Uterus (tissue), 4 donors: ENCODE measurements at regions of chr22 and their contacts with region 1.

Region 1: DNA sequence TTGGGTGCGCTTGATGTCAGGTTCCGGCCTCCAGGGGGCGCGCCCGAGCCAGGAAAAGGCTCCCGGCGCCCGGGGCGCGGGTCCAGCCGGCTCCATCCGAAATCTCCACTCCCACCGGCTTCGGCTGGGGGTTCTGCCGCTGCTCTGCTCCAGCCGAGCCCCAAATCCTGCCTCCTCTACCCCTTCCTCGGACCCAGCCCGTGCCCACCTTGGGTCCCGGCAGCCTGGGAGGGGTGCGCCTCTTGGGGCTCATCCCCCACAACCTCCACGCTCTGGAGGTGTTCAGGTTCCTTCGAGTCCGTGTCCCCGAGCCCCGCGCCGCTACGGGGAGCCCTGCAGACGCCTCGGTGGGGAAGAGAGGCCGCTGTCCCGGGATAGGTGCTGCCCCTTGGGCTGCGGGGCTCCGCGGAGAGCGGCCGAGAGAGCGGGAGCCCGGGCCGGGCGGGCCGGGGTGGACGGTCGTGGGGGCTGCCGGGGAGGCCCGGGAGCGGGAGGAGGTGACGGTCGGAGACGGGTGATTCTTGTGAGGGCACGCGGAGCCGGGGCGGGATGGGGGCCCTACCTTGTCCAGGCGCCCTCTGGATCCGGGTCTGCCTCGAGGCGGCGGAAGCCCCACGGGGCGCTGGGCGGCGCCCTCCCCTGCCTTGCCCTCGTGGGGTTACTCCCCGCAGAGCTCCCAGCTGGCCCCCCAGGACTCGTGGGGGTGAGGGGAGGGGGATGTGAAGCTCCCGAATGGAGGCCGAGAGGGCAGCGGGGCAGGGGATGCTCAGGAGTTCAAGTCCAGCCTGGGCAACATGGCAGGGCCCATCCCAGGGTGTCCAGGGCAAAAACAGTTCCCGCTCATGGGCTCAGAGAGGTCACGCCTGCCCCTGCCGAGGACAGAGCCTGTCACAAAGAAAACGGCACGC is 13.2 kb upstream of the CYB5R3 start:
- DNase-seq: peak; percentile 85 to 91
- H3K4me3 ChIP-seq: peak overlapping the region; percentile 45
- H3K27ac ChIP-seq: peak overlapping the region; percentile 70 to 73
- H3K4me1 ChIP-seq: no peaks in the 10 kb centered on the region
- H3K27me3 ChIP-seq: no peaks in the 10 kb centered on the region
- CTCF ChIP-seq: peak; percentile 79 to 90 (median 84)
- POLR2A ChIP-seq: peak in 1 of 2 donors; percentile 34

Region 2: DNA sequence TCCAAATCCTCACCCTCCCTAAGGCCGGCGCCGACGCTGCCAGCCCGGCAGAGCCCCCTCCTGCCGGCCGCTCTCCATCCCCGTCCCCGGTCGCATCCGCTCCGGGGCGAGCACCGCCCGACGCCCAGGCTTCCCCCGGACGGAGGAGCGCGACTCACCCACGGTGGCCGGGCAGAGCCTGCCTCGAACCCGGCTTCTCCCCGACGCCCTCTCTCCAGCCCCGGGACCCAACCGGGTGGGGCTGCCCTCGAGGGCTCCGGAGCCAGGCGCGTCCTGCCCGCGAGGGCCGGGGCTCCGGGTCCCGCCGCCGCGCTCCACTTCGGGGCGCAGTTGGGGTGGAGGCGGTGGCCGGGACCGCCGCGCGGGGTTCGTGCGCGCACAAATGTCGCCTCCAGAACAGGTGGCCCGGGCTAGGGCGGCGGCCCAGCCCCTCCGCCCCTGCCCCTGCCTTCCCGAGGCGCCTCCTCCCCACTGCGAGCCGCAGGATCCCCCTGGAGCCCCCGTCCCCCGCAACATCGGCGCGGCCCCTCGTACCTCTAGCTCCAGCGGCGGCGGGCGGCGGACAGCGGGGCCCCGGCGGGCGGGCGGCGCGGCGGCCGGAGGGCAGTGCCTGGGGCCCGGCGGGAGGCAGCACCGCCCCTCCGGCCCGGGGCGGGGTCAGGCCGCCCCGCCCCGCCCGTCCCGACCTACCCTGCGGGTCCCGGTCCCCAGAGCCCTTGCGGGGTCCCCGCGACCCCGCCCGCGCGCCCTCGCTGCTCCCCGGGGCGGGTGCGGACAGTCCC is 58.1 kb after region 1 on chr22 and contains the start of gene A4GALT:
- intact Hi-C with region 1: loop called (anchors 5 kb)
- DNase-seq: no peak
- H3K4me3 ChIP-seq: peak within 1 kb of the TSS; percentile 45 to 69
- H3K27ac ChIP-seq: peak within 1 kb of the TSS; percentile 82 to 97
- H3K4me1 ChIP-seq: peaks cover 0 to 8% of the 10 kb centered on the region in 2 donors
- H3K27me3 ChIP-seq: no peaks in the 10 kb centered on the region
- CTCF ChIP-seq: no peak
- POLR2A ChIP-seq: peak in 1 of 2 donors; percentile 26
- total RNA-seq, gene A4GALT: 4.4 to 100.0 (median 19.6) TPM

Region 3: DNA sequence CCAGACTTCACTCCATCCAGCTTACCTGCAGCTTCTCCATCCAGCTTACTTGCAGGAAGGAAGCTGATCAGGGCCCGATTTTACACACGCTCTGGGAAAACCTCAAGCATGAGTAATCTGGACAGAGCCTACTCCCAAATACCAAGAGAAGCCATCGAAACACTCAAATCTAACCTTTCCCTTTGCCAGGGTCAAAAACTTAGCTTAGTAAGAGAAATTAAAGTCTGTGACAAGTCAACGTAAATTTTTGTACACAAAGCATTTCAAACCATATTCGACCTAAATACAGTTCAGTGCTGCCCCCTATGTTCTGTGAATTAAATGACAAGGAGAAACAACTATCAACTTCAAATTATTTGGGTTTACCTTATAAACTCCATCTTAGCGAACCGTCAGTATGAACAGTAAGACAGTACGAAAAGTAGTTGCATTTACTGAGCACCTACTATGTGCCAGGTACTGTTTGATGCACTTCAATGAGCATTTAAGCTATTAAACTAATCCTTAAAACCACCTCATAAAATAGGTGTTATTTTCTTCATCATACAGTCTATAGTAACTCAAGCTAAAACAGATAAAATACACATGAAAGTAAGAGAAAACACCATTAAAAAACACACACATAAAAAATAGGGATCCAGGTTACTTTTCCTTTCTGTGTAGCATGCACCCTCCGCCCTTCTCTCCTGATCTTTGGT is 157.8 kb after region 1 on chr22:
- intact Hi-C with region 1: loop called (anchors 5 kb)
- DNase-seq: no peak
- H3K4me3 ChIP-seq: no peak overlapping the region
- H3K27ac ChIP-seq: peak overlapping the region in 1 of 2 donors; percentile 61
- H3K4me1 ChIP-seq: no peaks in the 10 kb centered on the region
- H3K27me3 ChIP-seq: no peaks in the 10 kb centered on the region
- CTCF ChIP-seq: peak; percentile 16 to 72 (median 38)
- POLR2A ChIP-seq: no peak